ENCODE measurements at regions of chrX and their contacts with region 1.

Region 1: GRCh38 chrX:154443992-154444754 is at the start of gene FAM50A:
- DNase-seq: peak; percentile 59 to 67 (median 62)
- H3K4me3 ChIP-seq: peak within 1 kb of the TSS; percentile 3 to 45
- H3K4me3 Mint-ChIP-seq: peak within 1 kb of the TSS; percentile 63 to 86 (median 77)
- H3K27ac ChIP-seq: peak within 1 kb of the TSS; percentile 69
- H3K27ac Mint-ChIP-seq: peak within 1 kb of the TSS; percentile 81 to 95 (median 89)
- H3K4me1 ChIP-seq: peaks cover 49% of the 10 kb centered on the region
- H3K4me1 Mint-ChIP-seq: peaks cover 7 to 51% (median 23%) of the 10 kb centered on the region in 4 donors
- H3K27me3 ChIP-seq: no peaks in the 10 kb centered on the region
- H3K27me3 Mint-ChIP-seq: no peaks in the 10 kb centered on the region
- total RNA-seq, gene FAM50A: 65.2 to 70.3 TPM

Region 2: GRCh38 chrX:154428176-154429010 is 15.8 kb before region 1 on chrX and contains the start of gene ATP6AP1:
- CTCF ChIA-PET with region 1: no interaction called
- POLR2A ChIA-PET with region 1: interaction called, 3 read pairs
- intact Hi-C with region 1: loop called (anchors 2 kb)
- DNase-seq: peak; percentile 84 to 89 (median 89)
- H3K4me3 ChIP-seq: peak within 1 kb of the TSS; percentile 61 to 62
- H3K4me3 Mint-ChIP-seq: peak within 1 kb of the TSS; percentile 74 to 89 (median 84)
- H3K27ac ChIP-seq: peak within 1 kb of the TSS; percentile 65
- H3K27ac Mint-ChIP-seq: peak within 1 kb of the TSS; percentile 72 to 93 (median 86)
- H3K4me1 ChIP-seq: peaks cover 28% of the 10 kb centered on the region
- H3K4me1 Mint-ChIP-seq: peaks cover 13 to 30% (median 23%) of the 10 kb centered on the region in 4 donors
- H3K27me3 ChIP-seq: no peaks in the 10 kb centered on the region
- H3K27me3 Mint-ChIP-seq: no peaks in the 10 kb centered on the region
- total RNA-seq, gene ATP6AP1: 60.4 to 62.6 TPM

Region 3: GRCh38 chrX:154478728-154479622 is 34.8 kb after region 1 on chrX and contains the start of gene LAGE3:
- CTCF ChIA-PET with region 1: interaction called, 3 read pairs
- POLR2A ChIA-PET with region 1: interaction called, 4 read pairs
- intact Hi-C with region 1: loop called (anchors 5 kb)
- DNase-seq: peak; percentile 89 to 96 (median 94)
- H3K4me3 ChIP-seq: peak within 1 kb of the TSS in 1 of 2 donors; percentile 55
- H3K4me3 Mint-ChIP-seq: peak within 1 kb of the TSS; percentile 78 to 87 (median 83)
- H3K27ac ChIP-seq: peak within 1 kb of the TSS; percentile 76
- H3K27ac Mint-ChIP-seq: peak within 1 kb of the TSS; percentile 87 to 97 (median 91)
- H3K4me1 ChIP-seq: peaks cover 21% of the 10 kb centered on the region
- H3K4me1 Mint-ChIP-seq: peaks cover 5 to 19% (median 10%) of the 10 kb centered on the region in 4 donors
- H3K27me3 ChIP-seq: no peaks in the 10 kb centered on the region
- H3K27me3 Mint-ChIP-seq: no peaks in the 10 kb centered on the region
- total RNA-seq, gene LAGE3: 18.5 to 19.3 TPM

Region 4: DNA sequence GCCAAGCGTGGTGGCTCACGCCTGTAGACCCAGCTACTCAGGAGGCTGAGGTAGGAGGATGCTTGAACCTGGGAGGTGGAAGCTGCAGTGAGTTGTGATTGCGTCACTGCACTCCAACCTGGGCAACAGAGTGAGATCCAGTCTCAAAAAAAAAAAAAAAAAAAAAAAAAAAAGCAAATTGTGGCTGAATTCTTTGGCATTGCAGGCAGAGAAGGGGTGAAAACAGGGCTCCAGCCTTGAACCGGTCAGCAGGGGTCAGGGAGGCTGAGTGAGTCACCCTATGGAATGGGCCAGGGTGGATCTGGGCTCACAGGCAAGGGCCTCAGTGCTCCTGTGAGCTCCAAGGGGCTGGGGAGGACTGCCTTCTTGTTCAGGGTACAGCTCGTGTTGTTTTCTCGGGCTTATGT is 85.0 kb after region 1 on chrX:
- CTCF ChIA-PET with region 1: no interaction called
- POLR2A ChIA-PET with region 1: no interaction called
- intact Hi-C with region 1: no loop called
- DNase-seq: no peak
- H3K4me3 ChIP-seq: no peak overlapping the region
- H3K4me3 Mint-ChIP-seq: peak overlapping the region in 1 of 8 donors; percentile 31
- H3K27ac ChIP-seq: no peak overlapping the region
- H3K27ac Mint-ChIP-seq: no peak overlapping the region
- H3K4me1 ChIP-seq: peaks cover 23% of the 10 kb centered on the region
- H3K4me1 Mint-ChIP-seq: peaks cover 11 to 28% (median 16%) of the 10 kb centered on the region in 4 donors
- H3K27me3 ChIP-seq: no peaks in the 10 kb centered on the region
- H3K27me3 Mint-ChIP-seq: no peaks in the 10 kb centered on the region

Measured in CD4-positive, alpha-beta memory T cell (primary cell).